ENCODE measurements at regions of chr3 and their contacts with region 1.

Region 1: DNA sequence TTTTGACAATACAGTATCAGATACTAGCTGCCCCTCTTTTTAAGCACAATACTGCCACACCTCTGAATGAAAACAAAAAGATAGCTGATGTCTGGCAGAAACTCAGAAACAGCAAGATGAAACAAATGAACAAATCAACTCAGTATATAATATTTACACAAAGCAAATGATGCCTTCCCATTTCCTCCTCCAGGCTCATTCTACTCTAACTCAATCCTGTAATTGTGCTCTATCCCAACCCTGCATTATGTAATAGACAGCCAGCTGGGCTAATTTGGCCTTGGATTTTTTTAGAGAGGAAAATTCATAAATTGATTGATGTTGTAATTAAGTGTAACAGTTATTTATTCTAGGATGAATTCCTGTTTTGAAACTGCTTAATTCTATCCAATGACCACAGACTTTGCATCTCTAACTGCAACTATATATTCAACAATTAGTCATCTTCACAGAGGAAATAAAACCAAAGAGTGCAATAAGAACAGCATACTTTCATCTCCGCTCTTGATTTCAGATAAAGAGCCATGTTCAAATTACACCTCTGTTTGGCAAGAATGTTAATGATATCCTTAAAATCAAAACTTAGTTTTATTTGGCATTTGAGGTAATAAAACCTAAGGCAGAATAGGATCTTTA is 6.1 kb downstream of the ATG3 start:
- DNase-seq: no peak
- H3K4me3 ChIP-seq: no peak overlapping the region
- H3K27ac ChIP-seq: no peak overlapping the region
- H3K4me1 ChIP-seq: peaks cover 21% of the 10 kb centered on the region
- CTCF ChIP-seq: no peak

Region 2: GRCh38 chr3:112531358-112531781 is 24.3 kb before region 1 on chr3:
- CTCF ChIA-PET with region 1: no interaction called
- POLR2A ChIA-PET with region 1: interaction called, 10 read pairs
- intact Hi-C with region 1: no loop called
- DNase-seq: peak; percentile 61
- H3K4me3 ChIP-seq: no peak overlapping the region
- H3K27ac ChIP-seq: no peak overlapping the region
- H3K4me1 ChIP-seq: no peaks in the 10 kb centered on the region
- CTCF ChIP-seq: peak; percentile 90

Region 3: DNA sequence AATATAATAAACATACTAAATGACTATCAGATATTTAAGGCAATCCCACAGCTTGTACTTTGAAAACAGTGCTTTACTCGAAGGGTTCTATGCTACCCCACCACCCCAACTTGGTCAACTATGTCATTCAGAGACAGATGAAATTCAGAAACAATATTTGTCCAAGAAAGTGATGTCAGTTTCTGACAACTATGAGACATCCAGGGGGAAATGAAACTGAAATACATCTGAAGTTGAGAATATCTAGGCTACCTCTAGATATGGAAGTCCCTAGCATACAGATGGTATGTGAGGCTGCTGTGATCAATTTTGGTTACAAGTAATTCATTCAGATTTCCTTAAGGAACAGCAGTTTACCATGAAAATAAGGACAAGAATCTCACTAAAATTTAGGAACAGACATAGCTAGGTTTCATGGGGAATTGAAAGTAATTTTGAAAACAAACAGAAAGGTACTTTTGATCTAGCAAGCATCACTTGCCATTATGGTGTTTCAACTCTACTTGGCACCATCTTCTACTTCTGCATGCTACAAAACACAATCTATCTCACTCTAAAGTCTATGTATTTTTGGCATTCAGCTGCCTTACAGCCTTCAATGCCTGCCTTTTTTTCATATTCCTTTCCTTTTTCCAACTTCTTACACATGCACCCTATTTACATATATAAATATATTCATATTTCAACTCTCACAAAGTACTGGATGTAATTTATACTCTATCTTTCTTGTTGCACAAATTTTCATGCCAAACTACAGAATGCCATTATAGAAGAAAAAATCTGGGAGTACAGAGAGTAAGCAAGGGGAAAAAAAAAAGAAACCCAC is 15.6 kb before region 1 on chr3:
- CTCF ChIA-PET with region 1: no interaction called
- POLR2A ChIA-PET with region 1: interaction called, 13 read pairs
- intact Hi-C with region 1: no loop called
- DNase-seq: no peak
- H3K4me3 ChIP-seq: no peak overlapping the region
- H3K27ac ChIP-seq: no peak overlapping the region
- H3K4me1 ChIP-seq: peaks cover 5% of the 10 kb centered on the region
- CTCF ChIP-seq: no peak

Region 4: GRCh38 chr3:112671930-112672715 is 116.5 kb after region 1 on chr3:
- CTCF ChIA-PET with region 1: no interaction called
- POLR2A ChIA-PET with region 1: no interaction called
- intact Hi-C with region 1: no loop called
- DNase-seq: no peak
- H3K4me3 ChIP-seq: no peak overlapping the region
- H3K27ac ChIP-seq: no peak overlapping the region
- H3K4me1 ChIP-seq: peaks cover 10% of the 10 kb centered on the region
- CTCF ChIP-seq: no peak